ENCODE measurements at regions of chr11 and their contacts with region 1.

Region 1: GRCh38 chr11:102614485-102614884 is 10.6 kb downstream of the MMP20 start:
- DNase-seq: no peak
- ATAC-seq: no peak
- H3K4me3 Mint-ChIP-seq: no peak overlapping the region
- H3K27ac Mint-ChIP-seq: no peak overlapping the region
- H3K4me1 Mint-ChIP-seq: peaks cover 32% of the 10 kb centered on the region
- H3K27me3 Mint-ChIP-seq: no peaks in the 10 kb centered on the region
- CTCF ChIP-seq: no peak

Region 2: GRCh38 chr11:101706541-101706940 is 907.9 kb before region 1 on chr11:
- CTCF ChIA-PET with region 1: no interaction called
- POLR2A ChIA-PET with region 1: no interaction called
- intact Hi-C with region 1: no loop called
- DNase-seq: no peak
- ATAC-seq: no peak
- H3K4me3 Mint-ChIP-seq: no peak overlapping the region
- H3K27ac Mint-ChIP-seq: no peak overlapping the region
- H3K4me1 Mint-ChIP-seq: no peaks in the 10 kb centered on the region
- H3K27me3 Mint-ChIP-seq: no peaks in the 10 kb centered on the region
- CTCF ChIP-seq: no peak

Region 3: DNA sequence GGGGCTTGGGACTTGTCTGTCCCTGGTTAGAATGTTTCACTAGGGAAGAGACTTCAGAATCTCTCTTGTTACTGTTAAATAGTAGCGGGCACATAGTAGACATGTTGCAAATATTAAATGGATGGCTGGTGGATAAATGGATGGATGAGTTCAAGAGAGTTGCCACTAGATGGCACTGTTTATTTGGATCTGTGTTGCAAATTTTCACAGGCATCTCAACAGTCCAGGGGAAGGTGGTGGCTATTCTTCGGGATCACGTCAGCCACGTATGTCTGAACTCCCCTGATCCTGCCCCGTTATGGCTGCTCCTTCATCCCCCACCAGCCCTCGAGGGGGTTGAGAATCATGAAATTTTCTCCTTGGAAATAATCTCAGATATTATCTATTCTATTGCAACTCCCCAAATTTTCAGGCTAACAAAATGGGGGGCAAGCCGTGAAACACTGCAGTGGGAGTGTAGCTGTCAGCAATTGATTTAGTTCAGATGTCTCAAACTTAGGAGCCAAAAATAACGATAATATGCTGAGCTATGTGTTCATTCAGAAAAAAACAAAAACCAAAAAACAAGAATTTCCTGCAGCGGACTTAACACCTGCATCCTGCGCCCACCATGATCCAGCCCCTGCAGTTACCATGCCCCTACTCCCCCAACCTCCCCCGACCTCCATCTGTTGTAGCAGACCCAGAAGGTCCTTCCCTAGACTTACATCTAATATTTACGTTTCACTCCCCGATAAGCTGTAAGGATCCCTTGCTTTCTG is 326.3 kb before region 1 on chr11:
- CTCF ChIA-PET with region 1: interaction called, 58 read pairs
- POLR2A ChIA-PET with region 1: interaction called, 9 read pairs
- intact Hi-C with region 1: loop called (anchors 1 kb)
- DNase-seq: no peak
- ATAC-seq: peak; percentile 84
- H3K4me3 Mint-ChIP-seq: peak overlapping the region; percentile 74
- H3K27ac Mint-ChIP-seq: peak overlapping the region; percentile 57
- H3K4me1 Mint-ChIP-seq: peaks cover 37% of the 10 kb centered on the region
- H3K27me3 Mint-ChIP-seq: no peaks in the 10 kb centered on the region
- CTCF ChIP-seq: no peak

Region 4: DNA sequence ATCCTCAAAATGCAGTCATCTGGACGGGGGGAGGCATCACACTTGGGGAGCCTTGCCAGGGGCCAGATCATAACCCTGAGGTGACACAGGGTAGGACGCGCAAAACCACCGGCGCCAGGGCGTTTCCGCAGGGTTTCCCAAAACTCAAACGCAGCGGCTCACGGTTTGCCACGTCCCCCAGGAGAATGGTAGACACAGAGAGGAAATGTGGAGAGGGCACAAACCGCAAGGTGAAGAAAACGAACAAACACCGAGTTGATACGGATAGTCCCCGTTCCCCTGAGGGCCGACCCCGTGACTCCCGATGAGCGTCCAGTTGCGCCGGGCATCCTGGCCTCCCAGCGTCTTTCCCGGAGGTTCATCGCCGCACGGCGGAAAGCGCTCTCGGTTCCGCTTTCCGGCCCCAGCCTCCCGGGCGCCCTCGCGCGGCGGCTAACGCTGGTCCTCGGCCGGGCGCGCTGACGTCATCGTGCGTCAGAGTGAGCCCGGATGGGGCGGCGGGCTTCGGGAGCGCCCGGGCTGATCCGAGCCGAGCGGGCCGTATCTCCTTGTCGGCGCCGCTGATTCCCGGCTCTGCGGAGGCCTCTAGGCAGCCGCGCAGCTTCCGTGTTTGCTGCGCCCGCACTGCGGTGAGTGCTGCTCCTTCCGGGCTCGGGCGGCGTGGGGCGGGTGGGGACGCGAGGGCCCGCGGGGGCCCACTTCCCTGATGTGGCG is 267.6 kb before region 1 on chr11 and contains the start of gene BIRC2:
- CTCF ChIA-PET with region 1: interaction called, 120 read pairs
- POLR2A ChIA-PET with region 1: interaction called, 5 read pairs
- intact Hi-C with region 1: no loop called
- DNase-seq: peak; percentile 98
- ATAC-seq: peak; percentile 86
- H3K4me3 Mint-ChIP-seq: peak within 1 kb of the TSS; percentile 93
- H3K27ac Mint-ChIP-seq: peak within 1 kb of the TSS; percentile 95
- H3K4me1 Mint-ChIP-seq: peaks cover 38% of the 10 kb centered on the region
- H3K27me3 Mint-ChIP-seq: no peaks in the 10 kb centered on the region
- CTCF ChIP-seq: no peak
- total RNA-seq, gene BIRC2: 27.1 and 34.9 TPM in 2 replicates

Region 5: GRCh38 chr11:102451681-102452460 is 162.6 kb before region 1 on chr11:
- CTCF ChIA-PET with region 1: interaction called, 7 read pairs
- POLR2A ChIA-PET with region 1: interaction called, 4 read pairs
- intact Hi-C with region 1: loop called (anchors 1 kb)
- DNase-seq: peak; percentile 61
- ATAC-seq: peak; percentile 57
- H3K4me3 Mint-ChIP-seq: peak overlapping the region; percentile 98
- H3K27ac Mint-ChIP-seq: peak overlapping the region; percentile 99
- H3K4me1 Mint-ChIP-seq: peaks cover 69% of the 10 kb centered on the region
- H3K27me3 Mint-ChIP-seq: no peaks in the 10 kb centered on the region
- CTCF ChIP-seq: no peak

Region 6: GRCh38 chr11:102534261-102534872 is 80.1 kb before region 1 on chr11:
- CTCF ChIA-PET with region 1: interaction called, 13 read pairs
- POLR2A ChIA-PET with region 1: interaction called, 3 read pairs
- intact Hi-C with region 1: no loop called
- DNase-seq: no peak
- ATAC-seq: peak; percentile 42
- H3K4me3 Mint-ChIP-seq: no peak overlapping the region
- H3K27ac Mint-ChIP-seq: no peak overlapping the region
- H3K4me1 Mint-ChIP-seq: peaks cover 40% of the 10 kb centered on the region
- H3K27me3 Mint-ChIP-seq: no peaks in the 10 kb centered on the region
- CTCF ChIP-seq: no peak

Region 7: DNA sequence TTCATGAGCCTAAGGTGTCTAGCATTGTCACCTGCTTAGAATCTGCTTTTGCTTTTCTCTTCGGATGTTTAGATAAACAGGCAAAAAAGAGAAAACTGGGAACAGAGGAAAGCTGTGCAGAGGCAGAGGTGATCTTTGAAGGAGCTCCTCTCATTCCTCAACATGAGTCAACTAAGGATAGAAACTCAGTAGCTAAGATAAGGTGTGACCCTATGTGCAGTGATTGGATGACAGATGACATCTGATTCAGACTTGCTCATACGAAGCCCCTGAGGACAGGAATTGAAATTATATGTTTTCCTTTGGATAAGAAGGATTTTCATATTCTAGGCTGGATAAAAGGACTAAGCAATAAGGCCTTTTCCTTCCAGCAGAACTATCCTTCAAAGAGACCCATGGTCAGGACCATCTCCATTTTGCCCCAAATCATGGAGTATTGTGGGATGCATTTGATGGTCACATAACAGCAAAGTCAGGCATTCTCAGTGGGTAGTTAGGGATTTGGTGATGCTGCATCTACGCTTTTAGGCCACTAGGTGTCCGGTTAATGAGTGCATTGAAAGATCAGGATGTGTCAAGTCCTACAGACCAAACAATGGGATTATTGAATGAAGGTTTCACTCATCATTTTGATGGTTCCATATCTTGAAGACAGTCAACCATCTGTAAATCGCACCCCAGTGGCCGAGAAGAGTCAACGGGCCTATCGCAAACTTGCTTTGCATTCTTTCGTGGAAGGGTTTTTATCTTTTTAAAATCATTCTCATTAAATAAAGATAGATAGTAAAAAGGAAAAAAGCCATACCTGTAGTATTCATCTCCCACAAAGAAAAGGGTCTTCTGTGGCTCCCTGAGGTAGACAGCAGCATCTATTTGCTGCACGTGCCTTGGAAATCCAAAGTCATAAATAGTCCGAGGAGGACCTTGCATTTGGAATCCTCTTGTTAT is 21.6 kb before region 1 on chr11:
- CTCF ChIA-PET with region 1: interaction called, 13 read pairs
- POLR2A ChIA-PET with region 1: interaction called, 10 read pairs
- intact Hi-C with region 1: loop called (anchors 1 kb)
- DNase-seq: no peak
- ATAC-seq: no peak
- H3K4me3 Mint-ChIP-seq: no peak overlapping the region
- H3K27ac Mint-ChIP-seq: no peak overlapping the region
- H3K4me1 Mint-ChIP-seq: peaks cover 40% of the 10 kb centered on the region
- H3K27me3 Mint-ChIP-seq: no peaks in the 10 kb centered on the region
- CTCF ChIP-seq: no peak

Region 8: GRCh38 chr11:102637731-102638130 is 23.2 kb after region 1 on chr11:
- CTCF ChIA-PET with region 1: no interaction called
- POLR2A ChIA-PET with region 1: no interaction called
- intact Hi-C with region 1: no loop called
- DNase-seq: no peak
- ATAC-seq: no peak
- H3K4me3 Mint-ChIP-seq: no peak overlapping the region
- H3K27ac Mint-ChIP-seq: no peak overlapping the region
- H3K4me1 Mint-ChIP-seq: no peaks in the 10 kb centered on the region
- H3K27me3 Mint-ChIP-seq: peaks cover 11% of the 10 kb centered on the region
- CTCF ChIP-seq: no peak